Left cardiac atrium (tissue), 4 donors: ENCODE measurements at regions of chr1 and their contacts with region 1.

Region 1: GRCh38 chr1:206663832-206664652 is 20.7 kb upstream of the MAPKAPK2 start:
- DNase-seq: peak; percentile 63
- ATAC-seq: peak; percentile 75 to 77

Region 2: GRCh38 chr1:206684478-206685333 is 20.7 kb after region 1 on chr1 and contains the start of gene MAPKAPK2:
- intact Hi-C with region 1: loop called in 1 of 2 experiments (anchors 2 kb)
- DNase-seq: peak; percentile 87
- ATAC-seq: peak; percentile 77 to 90
- total RNA-seq, gene MAPKAPK2: 154 to 219 TPM

Region 3: GRCh38 chr1:206797534-206798383 is 133.7 kb after region 1 on chr1:
- intact Hi-C with region 1: no loop called
- DNase-seq: no peak
- ATAC-seq: no peak